Activated naive CD4-positive, alpha-beta T cell treated with anti-CD3 and anti-CD28 coated beads, Interleukin-2, amount 10 ng/mL, durations not matched to agents 7 days and 5 days (primary cell): ENCODE measurements at regions of chr10 and their contacts with region 1.

Region 1: DNA sequence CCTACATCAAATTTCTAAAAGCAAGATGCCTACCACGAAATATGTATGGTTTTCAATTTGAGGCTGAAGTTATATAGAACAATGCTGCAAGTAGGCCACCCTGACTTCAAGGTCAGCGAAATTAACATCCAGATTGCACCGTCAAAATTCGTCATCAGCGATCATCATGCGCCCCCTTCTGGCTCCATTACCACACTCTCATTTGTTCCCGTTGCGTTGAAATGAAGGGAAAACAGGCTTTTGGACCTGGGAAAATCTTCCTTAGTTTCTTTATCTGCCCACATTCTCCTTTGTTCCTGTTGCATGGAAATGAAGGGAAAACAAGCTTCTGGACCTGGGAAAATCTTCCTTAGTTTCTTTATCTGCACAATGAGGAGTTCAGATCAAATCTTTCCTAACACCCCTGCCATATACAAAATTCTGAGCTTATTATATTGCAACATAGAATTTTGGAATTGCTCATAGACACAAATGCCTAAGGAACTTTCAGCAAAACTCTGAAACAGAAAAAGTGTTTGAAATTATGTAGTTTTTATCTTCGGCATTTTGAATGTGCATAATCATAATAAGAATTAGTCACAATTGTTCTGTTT is 98.2 kb upstream of the PRKCQ start:
- DNase-seq: peak; percentile 74
- H3K4me3 Mint-ChIP-seq: no peak overlapping the region
- H3K27ac Mint-ChIP-seq: no peak overlapping the region
- H3K4me1 Mint-ChIP-seq: peaks cover 6% of the 10 kb centered on the region
- H3K27me3 Mint-ChIP-seq: peaks cover 36% of the 10 kb centered on the region

Region 2: GRCh38 chr10:6409971-6410651 is 268.2 kb before region 1 on chr10:
- CTCF ChIA-PET with region 1: interaction called, 22 read pairs
- DNase-seq: peak; percentile 64
- H3K4me3 Mint-ChIP-seq: peak overlapping the region; percentile 16
- H3K27ac Mint-ChIP-seq: peak overlapping the region; percentile 86
- H3K4me1 Mint-ChIP-seq: peaks cover 51% of the 10 kb centered on the region
- H3K27me3 Mint-ChIP-seq: peaks cover 3% of the 10 kb centered on the region

Region 3: GRCh38 chr10:6416892-6417512 is 261.3 kb before region 1 on chr10:
- CTCF ChIA-PET with region 1: interaction called, 22 read pairs
- DNase-seq: no peak
- H3K4me3 Mint-ChIP-seq: no peak overlapping the region
- H3K27ac Mint-ChIP-seq: no peak overlapping the region
- H3K4me1 Mint-ChIP-seq: peaks cover 7% of the 10 kb centered on the region
- H3K27me3 Mint-ChIP-seq: no peaks in the 10 kb centered on the region

Region 4: GRCh38 chr10:6721480-6721879 is 43.2 kb after region 1 on chr10:
- CTCF ChIA-PET with region 1: no interaction called
- DNase-seq: no peak
- H3K4me3 Mint-ChIP-seq: no peak overlapping the region
- H3K27ac Mint-ChIP-seq: no peak overlapping the region
- H3K4me1 Mint-ChIP-seq: peaks cover 6% of the 10 kb centered on the region
- H3K27me3 Mint-ChIP-seq: peaks cover 62% of the 10 kb centered on the region